Tibial artery (tissue), 4 donors: ENCODE measurements at regions of chr2 and their contacts with region 1.

Region 1: DNA sequence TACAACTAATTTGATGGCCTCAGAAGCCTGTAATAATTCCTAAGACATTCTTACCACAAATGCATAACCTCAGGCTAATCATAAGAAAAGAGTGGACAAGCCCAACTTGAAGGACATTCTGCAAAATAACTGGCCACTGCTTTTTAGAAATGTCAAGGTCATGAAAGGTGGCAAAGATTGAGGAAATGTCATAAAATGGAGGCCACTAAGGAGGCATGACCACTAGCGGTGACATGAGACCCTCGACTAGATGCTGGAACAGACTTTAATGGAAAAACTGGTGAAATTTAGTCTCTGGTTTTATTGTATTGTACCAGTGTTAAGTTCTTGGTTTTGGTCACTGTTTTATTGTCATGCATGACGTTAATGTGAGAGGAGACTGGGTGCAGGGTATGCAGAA is 78.6 kb downstream of the SP3 start:
- DNase-seq: no peak
- H3K4me3 ChIP-seq: no peak overlapping the region
- H3K27ac ChIP-seq: no peak overlapping the region
- H3K4me1 ChIP-seq: peaks cover 0 to 2% (median 0%) of the 10 kb centered on the region in 4 donors
- H3K27me3 ChIP-seq: peaks cover 0 to 6% of the 10 kb centered on the region in 2 donors
- CTCF ChIP-seq: no peak

Region 2: DNA sequence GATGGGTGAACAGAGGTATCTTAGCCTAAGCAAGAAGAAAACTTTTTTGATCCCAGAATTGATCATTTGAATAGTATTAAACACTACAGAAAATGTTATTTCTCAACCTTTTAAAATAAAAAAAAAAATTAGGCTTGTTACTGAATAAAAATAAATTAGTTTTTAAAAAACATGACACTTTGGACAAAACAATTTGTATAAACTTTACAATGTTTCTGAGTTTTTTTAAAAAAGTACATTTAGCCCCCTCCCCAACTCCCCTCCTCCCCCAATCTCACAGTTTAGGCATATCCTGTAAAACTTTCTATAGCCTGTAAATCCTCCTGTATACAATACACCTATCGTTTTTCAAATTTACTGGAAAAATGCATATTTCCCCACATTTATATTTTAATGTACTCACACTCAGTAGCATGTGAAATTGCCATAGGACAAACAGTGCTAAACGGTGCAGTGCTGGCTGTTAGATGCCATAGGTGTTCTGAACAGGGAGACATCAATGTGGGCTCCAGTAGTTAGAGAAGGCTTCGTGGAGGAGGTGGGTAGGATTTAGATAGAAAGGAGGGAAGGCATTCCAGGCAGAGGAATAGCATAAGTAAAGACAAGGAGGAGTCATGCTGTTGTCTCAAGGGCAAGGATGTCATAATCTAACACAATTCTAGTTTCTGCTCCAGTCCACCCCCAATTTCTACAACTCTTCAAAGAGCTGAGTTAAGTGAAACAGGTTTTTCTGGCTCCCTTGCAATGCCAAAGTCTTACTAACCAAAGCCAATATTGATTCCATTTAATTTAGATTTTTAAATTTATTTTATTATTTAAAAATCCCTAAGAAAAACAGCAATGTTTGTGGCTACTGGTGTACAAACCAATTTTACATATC is 27.7 kb after region 1 on chr2:
- intact Hi-C with region 1: no loop called
- DNase-seq: no peak
- H3K4me3 ChIP-seq: no peak overlapping the region
- H3K27ac ChIP-seq: no peak overlapping the region
- H3K4me1 ChIP-seq: peaks cover 0 to 6% (median 0%) of the 10 kb centered on the region in 4 donors
- H3K27me3 ChIP-seq: no peaks in the 10 kb centered on the region
- CTCF ChIP-seq: no peak

Region 3: GRCh38 chr2:173934895-173935294 is 48.3 kb after region 1 on chr2:
- intact Hi-C with region 1: no loop called
- DNase-seq: no peak
- H3K4me3 ChIP-seq: no peak overlapping the region
- H3K27ac ChIP-seq: no peak overlapping the region
- H3K4me1 ChIP-seq: peaks cover 7 to 88% (median 23%) of the 10 kb centered on the region in 4 donors
- H3K27me3 ChIP-seq: no peaks in the 10 kb centered on the region
- CTCF ChIP-seq: no peak

Region 4: DNA sequence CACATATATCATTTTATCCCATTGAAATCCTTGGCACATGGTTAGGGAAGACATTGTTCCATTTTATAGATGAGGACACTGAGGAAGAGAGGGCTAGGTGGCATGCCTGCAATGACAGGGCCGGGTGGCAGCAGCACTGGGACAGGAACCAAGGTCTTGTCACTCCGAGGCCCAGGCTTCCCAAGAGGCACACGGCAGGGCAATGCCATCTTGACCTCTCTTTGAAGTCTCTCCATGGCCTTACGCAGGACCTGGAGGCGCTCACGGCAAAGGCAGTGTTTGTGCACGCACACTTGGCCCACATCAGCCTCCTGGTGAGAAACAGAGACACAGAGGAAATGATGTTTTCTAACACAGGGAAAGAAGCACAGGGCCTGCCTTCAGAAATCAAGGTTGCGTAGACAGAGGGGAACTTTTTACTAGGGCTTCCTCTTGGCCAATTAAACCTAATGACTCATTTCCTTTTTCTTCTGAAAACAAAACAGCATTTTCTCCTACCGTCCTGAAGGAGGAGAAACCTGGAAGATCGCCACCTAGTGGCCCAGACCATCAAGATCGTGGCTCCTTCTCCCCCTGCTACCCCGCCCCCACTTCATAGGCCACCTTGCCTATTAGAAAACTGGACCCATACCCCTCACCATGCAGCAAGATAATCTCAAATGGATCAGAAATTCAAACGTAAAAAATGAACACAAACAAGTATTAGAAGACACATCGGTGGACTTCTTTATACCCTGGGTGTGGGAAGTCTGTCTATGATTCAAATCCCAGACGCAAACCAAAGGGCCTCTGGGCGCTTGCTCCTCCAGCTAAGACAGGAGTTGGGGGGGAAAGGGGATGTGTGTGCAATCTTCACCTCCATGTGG is 153.2 kb after region 1 on chr2:
- intact Hi-C with region 1: loop called (anchors 5 kb)
- DNase-seq: peak; percentile 87 to 92
- H3K4me3 ChIP-seq: peak overlapping the region in 1 of 2 donors; percentile 3
- H3K27ac ChIP-seq: peak overlapping the region; percentile 74 to 77
- H3K4me1 ChIP-seq: peaks cover 7 to 41% (median 18%) of the 10 kb centered on the region in 4 donors
- H3K27me3 ChIP-seq: no peaks in the 10 kb centered on the region
- CTCF ChIP-seq: peak; percentile 84 to 86

Region 5: GRCh38 chr2:174158003-174158402 is 271.4 kb after region 1 on chr2:
- intact Hi-C with region 1: no loop called
- DNase-seq: no peak
- H3K4me3 ChIP-seq: no peak overlapping the region
- H3K27ac ChIP-seq: no peak overlapping the region
- H3K4me1 ChIP-seq: peaks cover 0 to 10% (median 0%) of the 10 kb centered on the region in 4 donors
- H3K27me3 ChIP-seq: no peaks in the 10 kb centered on the region
- CTCF ChIP-seq: peak in 1 of 2 experiments; percentile 14